Heart left ventricle (tissue), 16 donors: ENCODE measurements at regions of chr6 and their contacts with region 1.

Region 1: DNA sequence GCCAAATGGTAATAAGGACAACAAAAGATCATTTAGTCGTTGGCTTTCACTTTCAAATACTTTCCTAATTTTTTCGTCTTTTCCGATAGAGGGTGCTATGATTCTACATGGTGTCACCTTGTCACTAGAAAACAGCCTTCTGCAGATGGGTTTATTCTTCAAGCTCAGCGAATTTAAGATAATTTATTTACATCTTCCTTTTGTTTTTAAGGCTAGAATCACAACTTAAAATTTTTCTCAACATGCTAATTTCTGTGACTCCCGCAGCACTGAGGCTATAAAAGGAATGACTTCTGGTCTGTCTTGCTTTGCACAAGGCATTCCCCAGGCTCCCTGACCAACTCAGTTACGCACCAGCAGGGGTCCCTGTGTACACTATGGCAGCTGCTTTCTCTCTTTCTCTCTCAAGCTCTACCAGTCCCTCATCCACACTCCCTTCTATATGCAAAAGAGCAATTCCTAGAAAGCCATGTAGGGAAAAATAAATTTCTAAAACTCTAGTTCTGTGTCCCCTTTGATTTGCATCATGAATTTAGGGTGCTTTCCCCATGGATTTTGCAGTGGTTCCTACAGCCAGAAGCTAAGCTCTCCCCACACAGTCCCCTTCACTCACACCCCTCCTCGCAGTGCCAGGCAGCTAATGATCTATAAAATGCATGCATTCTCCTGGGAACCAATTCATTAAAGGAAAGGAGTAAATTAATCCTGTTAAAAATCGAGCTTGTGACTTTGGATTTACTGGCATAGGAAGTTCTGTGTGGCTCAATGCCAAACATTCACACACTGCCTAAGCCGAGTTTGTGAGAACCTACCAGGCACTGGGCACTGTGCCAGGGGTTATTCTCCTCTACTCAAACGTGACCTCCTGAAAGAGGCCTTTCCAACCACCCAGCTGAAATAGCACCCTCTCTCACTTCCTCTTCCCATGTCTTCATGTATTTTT is 74.5 kb downstream of the DCDC2 start:
- DNase-seq: peak; percentile 58 to 83 (median 71)
- ATAC-seq: peak; percentile 75 to 95 (median 86)
- H3K4me3 ChIP-seq: peak overlapping the region in 2 of 12 donors; percentile 16 to 34
- H3K27ac ChIP-seq: no peak overlapping the region
- H3K4me1 ChIP-seq: peaks cover 0 to 15% (median 5%) of the 10 kb centered on the region in 12 donors
- H3K27me3 ChIP-seq: peaks cover 0 to 14% (median 0%) of the 10 kb centered on the region in 9 donors
- CTCF ChIP-seq: peak; percentile 4 to 61 (median 48)
- POLR2A ChIP-seq: no peak

Region 2: DNA sequence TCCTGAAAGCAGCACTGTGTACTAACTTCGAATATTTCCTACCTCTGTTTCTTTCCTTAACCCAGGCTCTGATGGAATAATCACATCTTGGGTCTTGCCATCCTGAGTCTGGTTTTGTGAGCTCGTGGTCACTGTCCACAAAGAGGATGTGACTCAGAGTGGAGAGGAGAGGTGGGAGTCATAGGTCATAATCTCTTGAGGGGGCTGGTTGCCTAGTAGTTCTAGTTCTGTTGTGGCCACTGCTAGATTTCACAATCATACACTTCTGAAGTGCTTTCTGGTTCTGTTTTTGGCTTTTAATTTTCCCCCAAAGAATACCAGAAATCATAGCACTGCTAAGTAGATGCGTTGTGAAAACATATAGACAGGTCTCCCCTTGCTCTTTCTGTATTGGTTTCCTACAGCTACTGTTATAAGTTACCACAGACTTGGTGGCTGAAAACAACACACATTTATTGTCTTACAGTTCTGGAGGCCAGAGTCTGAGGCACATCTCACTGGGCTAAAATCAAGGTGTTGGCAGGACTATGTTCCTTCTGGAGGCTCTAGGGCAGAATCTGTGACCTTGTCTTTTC is 54.5 kb before region 1 on chr6:
- intact Hi-C with region 1: no loop called
- DNase-seq: no peak
- ATAC-seq: peak in 3 of 4 donors; percentile 64 to 86 (median 68)
- H3K4me3 ChIP-seq: no peak overlapping the region
- H3K27ac ChIP-seq: peak overlapping the region in 1 of 12 donors; percentile 4
- H3K4me1 ChIP-seq: no peaks in the 10 kb centered on the region
- H3K27me3 ChIP-seq: peaks cover 0 to 14% (median 0%) of the 10 kb centered on the region in 9 donors
- CTCF ChIP-seq: no peak
- POLR2A ChIP-seq: no peak

Region 3: GRCh38 chr6:24385536-24386269 is 102.4 kb after region 1 on chr6:
- intact Hi-C with region 1: loop called in 9 of 10 experiments (anchors 2 to 5 kb)
- DNase-seq: no peak
- ATAC-seq: no peak
- H3K4me3 ChIP-seq: no peak overlapping the region
- H3K27ac ChIP-seq: no peak overlapping the region
- H3K4me1 ChIP-seq: no peaks in the 10 kb centered on the region
- H3K27me3 ChIP-seq: peaks cover 0 to 5% (median 0%) of the 10 kb centered on the region in 9 donors
- CTCF ChIP-seq: no peak
- POLR2A ChIP-seq: no peak

Region 4: GRCh38 chr6:24394780-24395437 is 111.6 kb after region 1 on chr6:
- intact Hi-C with region 1: loop called in 2 of 10 experiments (anchors 2 to 5 kb)
- DNase-seq: no peak
- ATAC-seq: no peak
- H3K4me3 ChIP-seq: no peak overlapping the region
- H3K27ac ChIP-seq: no peak overlapping the region
- H3K4me1 ChIP-seq: no peaks in the 10 kb centered on the region
- H3K27me3 ChIP-seq: peaks cover 0 to 32% (median 8%) of the 10 kb centered on the region in 9 donors
- CTCF ChIP-seq: no peak
- POLR2A ChIP-seq: no peak